Aorta (tissue), 5 donors: ENCODE measurements at regions of chr2 and their contacts with region 1.

Region 1: DNA sequence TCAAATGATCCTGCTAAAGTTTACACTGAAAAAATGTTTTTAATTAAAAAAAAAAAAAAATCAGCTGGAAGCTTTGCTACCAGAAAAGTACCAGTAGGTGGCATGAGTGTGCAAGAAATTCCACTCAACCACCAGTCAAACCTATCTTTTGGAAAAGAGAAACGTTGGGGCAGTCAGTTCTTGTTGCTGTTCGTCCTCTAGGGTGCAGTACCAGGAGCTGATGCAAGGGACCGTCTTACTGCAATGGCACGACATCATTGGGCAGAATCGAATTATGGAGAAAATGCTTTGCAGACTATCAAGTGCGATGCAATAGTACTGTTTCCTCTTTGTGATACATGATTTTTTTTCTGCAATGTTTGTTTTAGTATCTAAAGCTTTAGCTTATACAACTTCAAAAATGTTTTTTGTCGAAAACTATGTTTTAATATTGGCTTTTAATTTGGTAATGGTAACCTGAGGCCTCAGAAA is 18.3 kb downstream of the YPEL5 start:
- DNase-seq: no peak
- ATAC-seq: peak; percentile 88
- H3K4me3 ChIP-seq: no peak overlapping the region
- H3K27ac ChIP-seq: no peak overlapping the region
- H3K4me1 ChIP-seq: no peaks in the 10 kb centered on the region
- H3K27me3 ChIP-seq: no peaks in the 10 kb centered on the region

Region 2: DNA sequence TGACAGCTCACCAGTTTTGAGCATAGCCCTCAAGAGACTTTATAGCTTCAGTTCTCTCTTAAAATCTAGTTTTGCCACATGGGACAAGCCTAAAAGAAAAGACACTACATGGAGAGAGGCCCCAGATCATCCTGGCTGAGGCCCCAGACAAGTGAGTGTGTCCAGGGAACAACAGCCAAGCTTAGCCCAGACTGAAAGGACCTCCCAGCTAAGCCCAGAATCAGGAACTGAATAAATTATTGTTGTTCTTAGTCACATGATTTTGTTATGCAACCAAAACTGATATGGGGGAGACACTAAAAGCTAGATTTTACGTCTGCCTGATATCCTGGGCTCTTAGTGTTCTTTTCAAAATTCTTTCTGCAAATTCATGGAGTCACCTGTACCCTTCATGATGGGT is 36.9 kb after region 1 on chr2:
- intact Hi-C with region 1: loop called in 1 of 2 experiments (anchors 5 kb)
- DNase-seq: no peak
- ATAC-seq: peak; percentile 81
- H3K4me3 ChIP-seq: no peak overlapping the region
- H3K27ac ChIP-seq: no peak overlapping the region
- H3K4me1 ChIP-seq: peaks cover 0 to 1% of the 10 kb centered on the region in 2 donors
- H3K27me3 ChIP-seq: no peaks in the 10 kb centered on the region